ENCODE measurements at regions of chr18 and their contacts with region 1.

Region 1: DNA sequence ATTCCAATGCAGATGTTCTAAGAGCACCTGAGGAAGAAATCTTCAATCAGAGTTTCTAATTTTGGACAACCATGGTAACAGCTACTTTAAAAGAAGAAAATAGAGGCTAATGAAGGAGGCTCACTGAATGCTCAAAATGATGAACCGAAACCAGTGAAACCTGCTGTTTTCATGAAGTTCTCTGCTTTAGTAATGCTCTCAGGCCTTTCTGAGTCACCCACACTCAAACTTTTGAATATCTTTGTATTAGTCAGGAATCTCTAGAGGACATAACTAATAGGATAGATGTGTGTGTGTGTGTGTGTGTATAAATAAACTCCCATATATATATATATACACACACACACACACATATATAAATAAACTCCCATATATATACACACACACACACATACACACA is 76.9 kb upstream of the RIT2 start:
- DNase-seq: no peak
- H3K4me3 ChIP-seq: no peak overlapping the region
- H3K27ac ChIP-seq: no peak overlapping the region
- H3K4me1 ChIP-seq: no peaks in the 10 kb centered on the region
- H3K27me3 ChIP-seq: no peaks in the 10 kb centered on the region
- CTCF ChIP-seq: no peak
- POLR2A ChIP-seq: no peak

Region 2: DNA sequence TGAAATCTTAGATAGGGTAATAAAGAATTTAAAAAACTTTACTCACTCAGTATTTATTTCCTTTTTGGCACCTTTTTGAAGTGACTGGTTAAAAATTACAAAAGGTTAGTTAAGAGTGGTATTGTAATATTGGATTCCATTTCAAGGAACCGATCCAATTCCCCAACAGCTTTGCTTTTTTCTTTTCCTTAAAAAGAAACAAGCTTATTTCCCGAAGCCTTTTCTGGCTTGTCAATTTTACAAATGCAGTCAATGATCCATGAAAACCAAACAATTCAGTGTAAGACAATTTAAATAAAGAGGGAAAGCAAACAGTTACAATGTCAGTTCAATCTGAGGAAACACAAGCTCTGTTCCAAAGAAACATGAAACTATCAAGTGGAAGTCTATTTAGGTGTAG is 277.1 kb before region 1 on chr18:
- intact Hi-C with region 1: loop called (anchors 5 kb)
- DNase-seq: no peak
- H3K4me3 ChIP-seq: no peak overlapping the region
- H3K27ac ChIP-seq: no peak overlapping the region
- H3K4me1 ChIP-seq: no peaks in the 10 kb centered on the region
- H3K27me3 ChIP-seq: no peaks in the 10 kb centered on the region
- CTCF ChIP-seq: no peak
- POLR2A ChIP-seq: no peak

Region 3: DNA sequence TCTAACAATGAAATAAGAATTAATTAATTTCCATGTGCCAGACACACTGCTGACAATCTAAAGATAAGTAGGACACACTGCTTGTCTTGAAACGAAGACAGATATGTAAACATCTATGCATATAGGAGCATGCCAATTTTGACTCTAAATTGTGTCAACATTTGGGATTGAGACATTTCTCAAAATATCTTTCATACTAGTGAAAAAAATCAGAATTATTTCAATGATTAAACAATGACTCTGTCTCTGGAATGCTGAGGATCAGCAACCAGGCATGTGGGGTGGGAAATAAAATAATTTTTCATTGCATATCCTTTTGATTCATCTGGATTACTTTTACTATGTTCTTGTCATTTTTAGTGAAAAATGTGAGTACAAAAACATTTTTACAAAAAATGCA is 347.5 kb after region 1 on chr18:
- intact Hi-C with region 1: no loop called
- DNase-seq: no peak
- H3K4me3 ChIP-seq: no peak overlapping the region
- H3K27ac ChIP-seq: no peak overlapping the region
- H3K4me1 ChIP-seq: no peaks in the 10 kb centered on the region
- H3K27me3 ChIP-seq: no peaks in the 10 kb centered on the region
- CTCF ChIP-seq: no peak
- POLR2A ChIP-seq: no peak